Esophagus muscularis mucosa (tissue), 4 donors: ENCODE measurements at regions of chr1 and their contacts with region 1.

Region 1: GRCh38 chr1:63773815-63774616 is at the start of gene ROR1:
- DNase-seq: peak; percentile 93
- H3K4me3 ChIP-seq: peak within 1 kb of the TSS; percentile 62 to 83 (median 70)
- H3K27ac ChIP-seq: peak within 1 kb of the TSS; percentile 76 to 87 (median 82)
- H3K4me1 ChIP-seq: peaks cover 6 to 31% (median 21%) of the 10 kb centered on the region in 4 donors
- H3K27me3 ChIP-seq: peaks cover 0 to 15% (median 0%) of the 10 kb centered on the region in 4 donors
- CTCF ChIP-seq: peak; percentile 47 to 64 (median 57)
- EP300 ChIP-seq: no peak
- POLR2A ChIP-seq: no peak
- total RNA-seq, gene ROR1: 5.1 to 7.3 (median 6.5) TPM

Region 2: GRCh38 chr1:63691701-63692425 is 82.2 kb before region 1 on chr1:
- intact Hi-C with region 1: loop called (anchors 10 kb)
- DNase-seq: no peak
- H3K4me3 ChIP-seq: no peak overlapping the region
- H3K27ac ChIP-seq: peak overlapping the region; percentile 19 to 44 (median 22)
- H3K4me1 ChIP-seq: peaks cover 5 to 21% (median 7%) of the 10 kb centered on the region in 4 donors
- H3K27me3 ChIP-seq: no peaks in the 10 kb centered on the region
- CTCF ChIP-seq: peak; percentile 69 to 73 (median 72)
- EP300 ChIP-seq: no peak
- POLR2A ChIP-seq: no peak

Region 3: GRCh38 chr1:63917571-63918417 is 143.8 kb after region 1 on chr1:
- intact Hi-C with region 1: loop called (anchors 10 kb)
- DNase-seq: no peak
- H3K4me3 ChIP-seq: no peak overlapping the region
- H3K27ac ChIP-seq: no peak overlapping the region
- H3K4me1 ChIP-seq: peaks cover 16 to 28% (median 22%) of the 10 kb centered on the region in 4 donors
- H3K27me3 ChIP-seq: no peaks in the 10 kb centered on the region
- CTCF ChIP-seq: no peak
- EP300 ChIP-seq: no peak
- POLR2A ChIP-seq: no peak

Region 4: DNA sequence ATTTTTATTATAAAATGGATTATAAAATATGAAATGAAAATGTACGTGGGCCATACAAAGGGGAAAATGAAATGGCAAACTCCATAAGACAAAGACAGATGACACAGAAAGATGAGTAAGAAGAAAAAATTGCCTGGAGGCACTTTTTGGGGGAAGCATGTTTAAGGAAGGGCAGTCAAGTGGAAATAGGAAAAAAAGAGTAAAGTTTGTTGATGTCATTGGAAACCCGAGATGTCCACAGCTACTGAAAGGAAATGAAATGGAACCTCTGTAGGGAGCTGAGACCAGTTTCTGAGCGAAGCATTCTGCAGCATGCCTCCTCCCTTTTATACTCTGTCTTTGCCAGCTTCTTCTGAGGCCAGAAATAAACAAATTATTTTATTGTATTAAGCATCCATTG is 226.0 kb after region 1 on chr1:
- intact Hi-C with region 1: no loop called
- DNase-seq: no peak
- H3K4me3 ChIP-seq: no peak overlapping the region
- H3K27ac ChIP-seq: no peak overlapping the region
- H3K4me1 ChIP-seq: no peaks in the 10 kb centered on the region
- H3K27me3 ChIP-seq: no peaks in the 10 kb centered on the region
- CTCF ChIP-seq: no peak
- EP300 ChIP-seq: no peak
- POLR2A ChIP-seq: no peak